ENCODE measurements at regions of chr1 and their contacts with region 1.

Region 1: DNA sequence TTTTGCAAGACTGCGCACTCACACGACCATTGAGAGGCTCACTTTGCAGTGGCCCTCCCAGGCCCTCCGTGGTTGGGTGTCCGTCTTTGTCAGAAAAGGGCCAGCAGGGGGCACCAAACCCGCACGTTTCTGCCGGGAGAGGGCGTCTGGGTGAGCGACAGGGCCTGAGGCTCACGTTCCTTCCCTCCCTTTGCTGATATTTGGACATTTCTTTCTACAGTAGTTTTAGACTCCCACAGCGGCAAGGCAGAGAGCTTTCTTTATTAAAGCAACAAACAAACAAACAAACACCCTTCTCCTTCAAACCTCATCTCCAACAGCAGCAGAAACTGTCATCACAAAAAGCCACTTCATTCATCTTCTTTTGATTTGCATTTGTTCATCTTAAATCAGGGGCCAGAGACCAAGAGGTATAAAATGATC is 79.2 kb upstream of the WDR26 start:
- DNase-seq: peak; percentile 88
- H3K4me3 ChIP-seq: no peak overlapping the region
- H3K27ac ChIP-seq: no peak overlapping the region
- H3K4me1 ChIP-seq: no peaks in the 10 kb centered on the region
- H3K27me3 ChIP-seq: no peaks in the 10 kb centered on the region
- CTCF ChIP-seq: peak; percentile 64 to 93 (median 88)
- EP300 ChIP-seq: no peak
- POLR2A ChIP-seq: no peak

Region 2: GRCh38 chr1:224852901-224853568 is 339.2 kb after region 1 on chr1:
- intact Hi-C with region 1: loop called (anchors 2 kb)
- DNase-seq: no peak
- H3K4me3 ChIP-seq: no peak overlapping the region
- H3K27ac ChIP-seq: no peak overlapping the region
- H3K4me1 ChIP-seq: no peaks in the 10 kb centered on the region
- H3K27me3 ChIP-seq: no peaks in the 10 kb centered on the region
- CTCF ChIP-seq: peak in 3 of 4 experiments; percentile 56 to 69 (median 66)
- EP300 ChIP-seq: no peak
- POLR2A ChIP-seq: no peak

Measured in sigmoid colon (tissue), 7 donors.